Left ventricle myocardium inferior (tissue), 1 donor: ENCODE measurements at regions of chr15 and their contacts with region 1.

Region 1: DNA sequence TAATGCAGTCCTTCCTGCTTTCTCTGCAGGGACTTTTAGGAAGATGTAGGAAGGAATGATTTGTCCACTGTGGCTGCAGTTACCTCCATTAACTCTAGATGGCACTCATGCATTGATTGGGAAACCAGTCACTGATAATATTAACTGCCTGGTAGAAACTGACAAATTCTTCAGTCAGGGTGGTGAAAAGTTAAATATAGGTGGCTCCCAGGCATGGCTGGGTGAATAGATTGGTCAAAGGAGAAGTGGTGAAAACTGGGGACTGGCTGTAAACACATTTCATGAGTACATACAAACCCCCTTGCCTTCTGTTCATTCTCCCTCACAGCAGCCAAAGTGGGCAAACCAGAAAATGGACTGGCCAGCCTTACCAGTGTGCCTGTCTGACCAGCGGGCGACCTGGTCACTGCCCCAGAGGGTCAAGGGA is 333.4 kb downstream of the THSD4 start:
- DNase-seq: no peak
- H3K4me3 ChIP-seq: no peak overlapping the region
- H3K27ac ChIP-seq: peak overlapping the region; percentile 89
- H3K4me1 ChIP-seq: peaks cover 58% of the 10 kb centered on the region
- H3K27me3 ChIP-seq: no peaks in the 10 kb centered on the region
- CTCF ChIP-seq: peak; percentile 96

Region 2: DNA sequence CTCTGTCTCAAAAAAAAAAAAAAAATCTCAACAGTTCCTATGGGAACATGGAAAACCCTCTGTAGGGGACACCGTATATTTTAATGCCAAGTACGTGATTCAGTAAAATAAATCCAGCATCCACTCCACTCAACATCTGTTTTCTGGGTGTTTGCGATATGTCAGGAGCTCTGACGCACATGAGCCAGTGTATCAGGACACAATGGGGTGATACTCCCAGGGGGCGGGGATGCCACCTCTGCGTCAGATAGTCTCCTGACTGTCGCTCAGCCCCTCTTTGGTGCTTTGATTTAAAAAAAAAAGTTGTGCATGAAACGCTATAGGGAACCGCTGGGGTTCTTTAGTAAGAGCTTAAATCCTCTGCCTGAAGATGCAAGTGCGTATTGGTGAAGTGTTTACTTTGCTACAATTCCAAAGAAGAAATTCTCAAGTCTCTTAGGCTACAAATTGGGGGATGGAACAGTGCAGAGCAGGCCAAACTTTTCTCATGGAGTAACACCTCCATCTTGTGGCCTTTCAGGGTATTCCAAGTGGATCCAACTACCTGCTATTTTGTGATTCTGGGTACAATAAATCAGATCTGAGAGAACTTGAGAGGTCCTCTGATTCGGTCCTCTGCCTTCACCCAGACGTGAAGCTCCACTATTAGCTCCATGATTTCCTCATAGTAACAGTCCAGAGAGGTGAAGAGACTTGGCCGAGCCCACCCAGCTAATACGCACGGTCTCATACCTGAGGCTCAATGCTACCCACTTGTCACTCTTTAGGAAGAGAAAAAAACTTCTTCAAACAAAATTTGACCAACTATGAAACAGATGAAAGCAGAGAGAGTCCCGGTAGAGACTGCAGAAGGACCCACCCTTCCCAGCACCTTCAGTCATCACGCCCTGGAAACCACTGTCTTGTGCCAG is 352.4 kb after region 1 on chr15:
- intact Hi-C with region 1: loop called (anchors 10 kb)
- DNase-seq: no peak
- H3K4me3 ChIP-seq: no peak overlapping the region
- H3K27ac ChIP-seq: no peak overlapping the region
- H3K4me1 ChIP-seq: peaks cover 17% of the 10 kb centered on the region
- H3K27me3 ChIP-seq: no peaks in the 10 kb centered on the region
- CTCF ChIP-seq: peak; percentile 89